Activated CD4-positive, alpha-beta T cell treated with anti-CD3 and anti-CD28 coated beads, Interleukin-2, amount 10 ng/mL, durations not matched to agents 24 days and 14 days (primary cell): ENCODE measurements at regions of chr13 and their contacts with region 1.

Region 1: DNA sequence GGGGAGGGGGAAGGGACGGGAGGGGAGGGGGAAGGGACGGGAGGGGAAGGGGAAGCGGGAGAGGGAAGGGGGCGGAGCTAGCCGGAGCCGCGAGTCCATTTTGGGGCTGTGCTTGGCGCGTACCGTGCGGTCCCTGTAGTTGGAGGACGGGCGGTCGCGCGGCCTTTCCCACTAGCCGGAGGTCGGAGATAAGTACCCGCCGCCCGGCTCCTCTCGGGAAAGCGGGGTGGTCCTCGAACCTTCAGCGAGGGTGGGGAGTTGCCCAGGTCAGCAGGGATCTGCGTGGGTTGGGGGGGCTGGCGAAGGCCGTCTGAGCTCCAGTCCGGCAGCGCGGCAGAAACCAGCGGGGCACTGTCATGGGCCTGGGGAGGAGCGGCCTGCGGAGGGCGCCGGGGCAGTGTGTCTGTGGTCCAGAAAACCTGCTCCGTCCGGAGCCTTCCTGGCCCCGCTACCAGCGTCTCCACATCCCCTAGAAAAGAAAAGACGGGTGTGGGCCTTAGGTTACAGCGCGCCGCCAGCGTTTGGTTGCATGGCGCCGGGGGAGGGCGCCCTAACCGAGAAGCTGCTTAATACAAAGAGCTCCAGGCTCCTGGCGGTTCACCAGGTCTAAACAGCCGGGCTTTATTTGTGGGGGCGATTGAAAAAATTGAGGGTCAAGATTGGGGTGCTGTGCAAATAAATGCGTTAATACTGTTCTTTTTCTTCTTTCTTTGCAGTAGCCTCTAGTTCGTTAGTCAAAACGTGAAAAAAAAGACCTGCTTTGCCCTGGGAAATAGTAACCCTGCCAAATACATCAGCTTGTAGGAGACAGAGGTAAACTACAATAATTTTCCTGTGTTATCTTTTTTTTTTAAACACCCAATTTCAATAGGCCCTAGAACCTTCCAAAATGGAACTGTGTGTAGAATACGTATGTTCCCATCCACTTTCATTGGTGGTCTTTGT is at the start of gene TRIM13:
- DNase-seq: peak; percentile 95
- H3K4me3 Mint-ChIP-seq: peak within 1 kb of the TSS; percentile 88
- H3K27ac Mint-ChIP-seq: peak within 1 kb of the TSS; percentile 95
- H3K4me1 Mint-ChIP-seq: peaks cover 36% of the 10 kb centered on the region
- H3K27me3 Mint-ChIP-seq: no peaks in the 10 kb centered on the region
- total RNA-seq, gene TRIM13: 18.0 and 18.9 TPM in 2 replicates

Region 2: DNA sequence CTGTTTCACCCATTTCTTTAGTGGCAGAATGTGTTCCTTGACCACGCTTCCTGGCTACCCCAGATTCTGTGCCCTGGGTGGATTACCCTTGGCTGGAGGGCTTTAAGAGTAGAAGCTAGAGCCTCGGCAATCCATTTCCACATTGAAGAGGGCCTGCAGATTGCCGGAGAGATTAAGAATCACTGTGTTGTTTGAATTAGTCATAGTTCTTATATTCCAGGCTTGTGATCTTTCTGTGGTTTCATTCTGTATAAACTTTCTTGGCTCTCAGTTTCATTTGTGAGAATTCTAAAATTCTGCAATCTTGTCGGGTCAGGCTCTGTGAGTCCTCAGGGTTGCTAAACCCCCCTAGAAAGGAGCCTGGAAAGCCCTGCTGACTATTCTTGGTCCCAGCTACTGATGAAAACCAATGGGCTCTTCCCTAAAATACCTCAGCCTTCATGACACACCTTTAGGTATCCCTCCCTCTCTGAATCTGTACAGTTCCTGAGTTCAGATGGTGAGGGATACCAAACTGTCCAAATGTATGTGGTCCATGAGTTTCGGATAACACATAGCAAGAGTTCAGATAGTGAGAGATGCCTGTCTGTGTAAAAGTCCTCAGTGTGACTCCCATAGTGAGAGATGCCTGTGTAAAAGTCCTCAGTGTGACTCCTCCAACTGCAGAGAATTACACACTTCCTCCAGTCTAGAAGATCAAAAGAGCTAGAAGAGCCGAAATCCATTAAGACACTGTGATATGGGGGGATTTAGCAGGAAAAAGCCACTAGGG is 497.1 kb before region 1 on chr13:
- intact Hi-C with region 1: no loop called
- DNase-seq: peak; percentile 67
- H3K4me3 Mint-ChIP-seq: peak overlapping the region; percentile 28
- H3K27ac Mint-ChIP-seq: peak overlapping the region; percentile 72
- H3K4me1 Mint-ChIP-seq: peaks cover 47% of the 10 kb centered on the region
- H3K27me3 Mint-ChIP-seq: no peaks in the 10 kb centered on the region

Region 3: GRCh38 chr13:49690992-49691886 is 306.0 kb before region 1 on chr13 and contains the start of gene EBPL:
- intact Hi-C with region 1: loop called (anchors 2 kb)
- DNase-seq: peak; percentile 96
- H3K4me3 Mint-ChIP-seq: peak within 1 kb of the TSS; percentile 93
- H3K27ac Mint-ChIP-seq: peak within 1 kb of the TSS; percentile 81
- H3K4me1 Mint-ChIP-seq: peaks cover 24% of the 10 kb centered on the region
- H3K27me3 Mint-ChIP-seq: no peaks in the 10 kb centered on the region
- total RNA-seq, gene EBPL: 49.0 and 52.3 TPM in 2 replicates

Region 4: GRCh38 chr13:49792550-49793324 is 204.5 kb before region 1 on chr13 and contains the start of gene KPNA3:
- intact Hi-C with region 1: loop called (anchors 2 kb)
- DNase-seq: peak; percentile 98
- H3K4me3 Mint-ChIP-seq: peak within 1 kb of the TSS; percentile 93
- H3K27ac Mint-ChIP-seq: peak within 1 kb of the TSS; percentile 99
- H3K4me1 Mint-ChIP-seq: peaks cover 30% of the 10 kb centered on the region
- H3K27me3 Mint-ChIP-seq: no peaks in the 10 kb centered on the region
- total RNA-seq, gene KPNA3: 56.5 and 58.8 TPM in 2 replicates

Region 5: GRCh38 chr13:49936085-49936940 is 60.9 kb before region 1 on chr13 and contains the start of gene SPRYD7:
- intact Hi-C with region 1: loop called (anchors 1 kb)
- DNase-seq: peak; percentile 99
- H3K4me3 Mint-ChIP-seq: peak within 1 kb of the TSS; percentile 94
- H3K27ac Mint-ChIP-seq: peak within 1 kb of the TSS; percentile 83
- H3K4me1 Mint-ChIP-seq: peaks cover 13% of the 10 kb centered on the region
- H3K27me3 Mint-ChIP-seq: peaks cover 17% of the 10 kb centered on the region
- total RNA-seq, gene SPRYD7: 6.9 and 8.1 TPM in 2 replicates

Region 6: DNA sequence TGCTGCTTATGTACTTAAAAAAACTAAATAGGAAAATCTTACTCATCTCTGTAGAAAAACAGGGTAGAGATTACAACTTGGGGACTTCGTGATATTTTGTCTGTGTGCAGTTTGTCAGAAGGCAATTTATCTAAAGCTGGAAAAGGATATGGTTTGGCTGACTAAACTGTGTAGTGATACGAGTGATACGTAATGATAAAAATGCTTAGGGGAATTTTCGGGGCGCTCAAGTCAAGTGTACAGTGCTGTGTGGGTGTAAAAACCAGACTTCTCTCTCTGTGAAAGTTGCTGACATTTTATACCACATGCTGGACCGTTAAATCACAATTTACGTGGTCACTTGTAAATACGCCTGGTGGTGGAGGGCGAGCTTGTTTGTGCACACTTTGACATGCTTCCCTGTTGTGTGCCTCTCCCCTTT is 239.7 kb after region 1 on chr13:
- intact Hi-C with region 1: loop called (anchors 5 kb)
- DNase-seq: peak; percentile 83
- H3K4me3 Mint-ChIP-seq: peak overlapping the region; percentile 23
- H3K27ac Mint-ChIP-seq: peak overlapping the region; percentile 84
- H3K4me1 Mint-ChIP-seq: peaks cover 34% of the 10 kb centered on the region
- H3K27me3 Mint-ChIP-seq: peaks cover 29% of the 10 kb centered on the region

Region 7: GRCh38 chr13:50529154-50529882 is 532.1 kb after region 1 on chr13:
- intact Hi-C with region 1: loop called (anchors 5 kb)
- DNase-seq: peak; percentile 70
- H3K4me3 Mint-ChIP-seq: peak overlapping the region; percentile 8
- H3K27ac Mint-ChIP-seq: peak overlapping the region; percentile 66
- H3K4me1 Mint-ChIP-seq: peaks cover 34% of the 10 kb centered on the region
- H3K27me3 Mint-ChIP-seq: peaks cover 21% of the 10 kb centered on the region

Region 8: GRCh38 chr13:50893211-50893852 is 896.1 kb after region 1 on chr13:
- intact Hi-C with region 1: loop called (anchors 5 kb)
- DNase-seq: peak; percentile 84
- H3K4me3 Mint-ChIP-seq: peak overlapping the region; percentile 63
- H3K27ac Mint-ChIP-seq: peak overlapping the region; percentile 86
- H3K4me1 Mint-ChIP-seq: peaks cover 54% of the 10 kb centered on the region
- H3K27me3 Mint-ChIP-seq: no peaks in the 10 kb centered on the region